ENCODE measurements at regions of chr16 and their contacts with region 1.

Region 1: DNA sequence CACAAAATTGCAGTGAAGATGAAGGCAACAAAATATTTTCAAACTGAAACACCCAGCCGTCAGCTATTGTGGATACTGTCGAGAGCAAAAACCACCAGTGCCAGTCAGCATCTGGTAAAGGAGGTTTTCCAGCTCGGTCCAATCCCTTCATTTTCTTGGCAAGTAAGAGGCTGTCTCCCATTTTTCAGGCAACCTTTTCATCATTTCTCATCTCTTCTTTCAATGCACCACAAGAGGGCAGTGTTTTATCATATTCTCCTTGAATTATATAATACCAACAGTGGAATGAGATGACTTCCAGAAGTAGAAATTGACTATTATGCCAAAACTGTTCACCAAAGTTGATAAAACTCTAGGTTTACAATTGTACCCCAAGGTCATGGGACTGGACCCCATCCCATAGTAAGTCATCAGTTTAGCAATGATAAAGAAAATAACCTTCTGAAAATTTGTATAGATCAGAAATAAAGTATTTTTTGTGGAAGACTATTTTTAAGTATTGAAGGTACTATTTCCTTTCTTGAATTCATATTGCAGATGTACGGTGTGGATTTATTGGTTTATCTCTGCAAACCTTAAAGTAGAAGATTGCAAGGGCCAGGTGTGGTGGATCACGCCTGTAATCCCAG is 16.8 kb downstream of the NQO1 start:
- DNase-seq: peak; percentile 54
- CTCF ChIP-seq: peak; percentile 61

Region 2: DNA sequence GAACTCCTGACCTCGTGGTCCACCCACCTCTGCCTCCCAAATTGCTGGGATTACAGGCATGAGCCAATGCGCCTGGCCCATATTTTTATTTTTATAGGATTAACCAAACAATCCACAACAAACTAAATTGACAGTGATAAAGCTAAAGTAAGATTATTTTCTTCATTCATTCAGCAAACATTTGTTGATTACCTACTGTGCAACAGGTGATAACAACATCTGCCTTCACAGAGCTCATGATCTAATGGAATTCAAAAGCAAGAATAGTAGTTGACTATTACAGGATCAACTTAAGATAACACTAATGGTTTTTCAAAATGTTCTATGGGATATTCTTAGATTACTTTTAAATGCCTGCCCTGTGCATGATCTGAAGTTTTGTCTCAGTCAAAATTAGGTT is 21.0 kb before region 1 on chr16:
- CTCF ChIA-PET with region 1: interaction called, 13 read pairs
- POLR2A ChIA-PET with region 1: no interaction called
- DNase-seq: no peak
- CTCF ChIP-seq: no peak

Region 3: GRCh38 chr16:69726296-69727060 is 16.9 kb after region 1 on chr16 and contains the start of gene NQO1:
- CTCF ChIA-PET with region 1: interaction called, 49 read pairs
- POLR2A ChIA-PET with region 1: no interaction called
- DNase-seq: peak; percentile 97
- CTCF ChIP-seq: no peak

Measured in GM10248 (cell line).